HCT116 (cell line): ENCODE measurements at regions of chr10 and their contacts with region 1.

Region 1: DNA sequence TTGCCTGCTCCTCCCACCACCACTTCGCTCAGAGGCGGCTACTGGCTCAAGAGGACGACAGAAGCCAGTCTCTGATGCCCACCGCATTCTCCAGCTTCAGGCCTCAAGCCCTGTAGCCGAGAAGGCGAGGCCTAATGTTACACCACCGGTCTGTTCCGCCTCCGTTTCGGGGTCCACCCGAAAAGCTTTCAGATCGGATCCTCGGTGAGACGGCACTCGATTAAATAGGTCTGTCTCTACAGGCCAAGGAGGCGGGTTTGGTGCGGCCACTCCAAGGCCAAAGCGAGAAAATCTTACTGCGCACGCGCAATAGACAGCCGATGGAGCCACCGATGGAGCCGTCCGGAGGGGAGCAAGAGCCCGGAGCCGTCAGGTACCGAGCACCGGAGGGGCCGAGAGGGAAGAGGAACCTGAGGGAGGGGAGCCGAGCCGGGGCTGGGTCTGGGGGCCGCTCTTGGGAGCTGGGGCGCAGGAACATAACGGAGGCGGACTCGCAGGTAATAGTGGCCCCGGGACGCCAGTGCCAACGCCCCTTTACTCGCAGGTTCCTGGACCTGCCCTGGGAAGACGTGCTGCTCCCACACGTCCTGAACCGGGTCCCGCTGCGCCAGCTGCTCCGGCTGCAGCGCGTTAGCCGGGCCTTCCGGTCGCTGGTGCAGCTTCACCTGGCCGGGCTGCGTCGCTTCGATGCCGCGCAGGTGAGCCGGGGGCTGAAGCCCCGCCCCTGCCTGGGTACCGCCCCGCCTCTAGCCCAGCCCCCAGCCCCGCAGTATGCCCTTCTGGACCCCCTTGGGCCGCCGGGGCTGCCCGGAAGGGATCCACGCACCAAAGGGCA is at the start of gene FBXL15:
- DNase-seq: peak; percentile 99
- ATAC-seq: peak; percentile 71
- H3K4me3 ChIP-seq: peak within 1 kb of the TSS; percentile 87 to 94
- H3K27ac ChIP-seq: peak within 1 kb of the TSS; percentile 77
- H3K4me1 ChIP-seq: peaks cover 15 to 33% of the 10 kb centered on the region in 2 experiments; a peak in 3 of 4 replicates
- H3K27me3 ChIP-seq: no peaks in the 10 kb centered on the region
- CTCF ChIP-seq: no peak
- POLR2A ChIP-seq: peak; percentile 20
- RAD21 ChIP-seq: no peak
- total RNA-seq, gene FBXL15: 21.1 TPM

Region 2: GRCh38 chr10:102038410-102038809 is 382.6 kb before region 1 on chr10:
- CTCF ChIA-PET with region 1: no interaction called
- POLR2A ChIA-PET with region 1: no interaction called
- RAD21 ChIA-PET with region 1: no interaction called
- intact Hi-C with region 1: no loop called
- DNase-seq: no peak
- ATAC-seq: no peak
- H3K4me3 ChIP-seq: no peak overlapping the region
- H3K27ac ChIP-seq: no peak overlapping the region
- H3K4me1 ChIP-seq: no peaks in the 10 kb centered on the region
- H3K27me3 ChIP-seq: no peaks in the 10 kb centered on the region
- CTCF ChIP-seq: no peak
- POLR2A ChIP-seq: no peak
- RAD21 ChIP-seq: no peak

Region 3: GRCh38 chr10:102167861-102168260 is 253.2 kb before region 1 on chr10:
- CTCF ChIA-PET with region 1: interaction called, 20 read pairs
- POLR2A ChIA-PET with region 1: interaction called, 6 read pairs
- RAD21 ChIA-PET with region 1: interaction called in 1 of 2 experiments, 3 read pairs
- intact Hi-C with region 1: loop called (anchors 1 kb)
- DNase-seq: no peak
- ATAC-seq: no peak
- H3K4me3 ChIP-seq: no peak overlapping the region
- H3K27ac ChIP-seq: no peak overlapping the region
- H3K4me1 ChIP-seq: peaks cover 4 to 6% of the 10 kb centered on the region in 2 experiments; a peak in 2 of 4 replicates
- H3K27me3 ChIP-seq: no peaks in the 10 kb centered on the region
- CTCF ChIP-seq: no peak
- POLR2A ChIP-seq: no peak
- RAD21 ChIP-seq: no peak

Region 4: GRCh38 chr10:102262744-102263370 is 158.2 kb before region 1 on chr10:
- CTCF ChIA-PET with region 1: no interaction called
- POLR2A ChIA-PET with region 1: no interaction called
- RAD21 ChIA-PET with region 1: no interaction called
- intact Hi-C with region 1: no loop called
- DNase-seq: no peak
- ATAC-seq: no peak
- H3K4me3 ChIP-seq: no peak overlapping the region
- H3K27ac ChIP-seq: no peak overlapping the region
- H3K4me1 ChIP-seq: no peaks in the 10 kb centered on the region
- H3K27me3 ChIP-seq: no peaks in the 10 kb centered on the region
- CTCF ChIP-seq: no peak
- POLR2A ChIP-seq: no peak
- RAD21 ChIP-seq: no peak

Region 5: GRCh38 chr10:102399217-102400089 is 21.6 kb before region 1 on chr10:
- CTCF ChIA-PET with region 1: interaction called, 36 read pairs
- POLR2A ChIA-PET with region 1: interaction called, 12 read pairs
- RAD21 ChIA-PET with region 1: interaction called in 1 of 2 experiments, 7 read pairs
- intact Hi-C with region 1: loop called (anchors 1 kb)
- DNase-seq: peak; percentile 80
- ATAC-seq: peak; percentile 75
- H3K4me3 ChIP-seq: peak overlapping the region; percentile 45 to 63
- H3K27ac ChIP-seq: peak overlapping the region; percentile 52
- H3K4me1 ChIP-seq: peaks cover 21 to 73% of the 10 kb centered on the region in 2 experiments
- H3K27me3 ChIP-seq: no peaks in the 10 kb centered on the region
- CTCF ChIP-seq: peak in 2 of 3 experiments; percentile 97 to 99; a peak in 4 of 6 replicates
- POLR2A ChIP-seq: peak; percentile 67
- RAD21 ChIP-seq: no peak

Region 6: GRCh38 chr10:102450194-102450938 is 29.3 kb after region 1 on chr10:
- CTCF ChIA-PET with region 1: interaction called, 4 read pairs
- POLR2A ChIA-PET with region 1: interaction called, 22 read pairs
- RAD21 ChIA-PET with region 1: interaction called in 1 of 2 experiments, 4 read pairs
- intact Hi-C with region 1: loop called (anchors 1 kb)
- DNase-seq: peak; percentile 82
- ATAC-seq: peak; percentile 76
- H3K4me3 ChIP-seq: peak overlapping the region; percentile 72 to 100
- H3K27ac ChIP-seq: peak overlapping the region; percentile 98
- H3K4me1 ChIP-seq: peaks cover 28 to 38% of the 10 kb centered on the region in 2 experiments
- H3K27me3 ChIP-seq: no peaks in the 10 kb centered on the region
- CTCF ChIP-seq: no peak
- POLR2A ChIP-seq: peak; percentile 94
- RAD21 ChIP-seq: no peak

Region 7: DNA sequence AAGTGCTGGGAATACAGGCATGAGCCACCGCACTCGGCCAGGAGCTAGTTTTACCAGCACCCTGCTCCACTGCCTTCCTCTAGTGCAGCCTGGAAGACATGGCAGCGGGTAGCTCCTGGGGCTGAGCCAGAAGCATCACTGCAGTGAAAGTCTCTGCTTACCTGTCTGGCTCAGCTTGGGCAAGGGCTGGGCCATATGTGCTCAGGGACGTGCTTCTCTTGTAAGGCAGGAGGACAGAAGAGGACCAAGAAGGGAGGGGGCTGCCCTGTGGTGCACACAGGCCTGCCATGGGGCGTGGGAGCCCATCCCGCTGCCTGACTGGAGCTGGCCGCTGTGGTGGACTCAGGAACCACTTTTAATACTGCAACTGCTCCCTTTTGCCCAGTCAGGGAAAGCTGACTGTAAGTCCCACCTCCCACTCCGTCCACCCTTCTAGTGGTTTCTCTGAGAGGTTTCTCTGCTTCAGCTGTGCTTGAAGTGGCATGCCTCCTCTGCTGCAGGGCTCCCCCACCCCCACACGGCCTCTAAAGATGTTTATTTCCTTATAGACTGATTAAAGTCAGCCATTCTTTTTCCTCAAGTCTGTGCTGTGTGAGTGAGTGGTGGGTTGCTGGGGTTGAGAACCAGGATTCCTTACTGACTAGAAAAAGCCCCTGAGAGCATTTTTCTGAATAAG is 55.6 kb after region 1 on chr10:
- CTCF ChIA-PET with region 1: interaction called, 18 read pairs
- POLR2A ChIA-PET with region 1: no interaction called
- RAD21 ChIA-PET with region 1: no interaction called
- intact Hi-C with region 1: loop called (anchors 2 kb)
- DNase-seq: no peak
- ATAC-seq: no peak
- H3K4me3 ChIP-seq: no peak overlapping the region
- H3K27ac ChIP-seq: no peak overlapping the region
- H3K4me1 ChIP-seq: no peaks in the 10 kb centered on the region
- H3K27me3 ChIP-seq: no peaks in the 10 kb centered on the region
- CTCF ChIP-seq: no peak
- POLR2A ChIP-seq: no peak
- RAD21 ChIP-seq: no peak